Activated T-helper 1 cell treated with anti-CD3 and anti-CD28 coated beads, Interleukin-12 subunit alpha, Interleukin-12 subunit beta, Interleukin-2, Interleukin-4 antibody, amounts not matched to agents 30 ng/mL and 10 ng/mL and 1 ng/mL, durations not matched to agents 14 hours and 24 hours and 36 hours (primary cell): ENCODE measurements at regions of chr12 and their contacts with region 1.

Region 1: DNA sequence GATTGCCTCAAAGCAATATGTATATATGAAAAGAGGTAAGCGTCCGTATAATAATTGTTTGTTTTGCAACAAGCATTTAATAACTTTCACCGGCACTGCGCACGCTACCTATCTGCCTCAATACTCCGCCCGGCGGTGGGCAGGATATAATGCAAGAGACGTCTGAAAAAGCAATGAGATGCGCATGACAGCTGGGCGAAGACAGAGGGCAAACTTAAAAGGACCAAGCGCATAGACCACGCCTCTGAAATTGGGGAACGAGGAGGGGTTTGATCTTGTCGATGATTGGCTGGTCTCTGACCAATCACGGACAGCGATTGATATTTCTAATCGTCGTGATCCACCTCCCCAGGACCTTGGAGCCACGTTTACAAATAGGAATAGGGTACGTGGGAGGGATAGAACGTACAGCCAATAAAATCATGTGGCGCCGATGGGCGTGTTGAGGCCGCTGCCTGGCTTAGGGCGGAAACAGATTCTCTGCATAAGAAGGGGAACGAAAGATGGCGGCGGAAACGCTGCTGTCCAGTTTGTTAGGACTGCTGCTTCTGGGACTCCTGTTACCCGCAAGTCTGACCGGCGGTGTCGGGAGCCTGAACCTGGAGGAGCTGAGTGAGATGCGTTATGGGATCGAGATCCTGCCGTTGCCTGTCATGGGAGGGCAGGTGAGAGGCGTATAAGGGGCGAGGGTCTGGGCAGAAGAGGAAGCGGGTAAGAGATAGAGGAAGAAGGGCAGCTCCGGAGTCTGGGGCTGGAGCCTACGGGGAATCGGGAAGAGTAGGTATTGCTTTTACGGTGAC is at the start of gene OS9:
- DNase-seq: peak; percentile 95
- H3K4me3 Mint-ChIP-seq: no peak within 1 kb of the TSS
- H3K27ac Mint-ChIP-seq: no peak within 1 kb of the TSS
- H3K4me1 Mint-ChIP-seq: no peaks in the 10 kb centered on the region
- H3K27me3 Mint-ChIP-seq: peaks cover 19% of the 10 kb centered on the region
- total RNA-seq, gene OS9: 99.6 and 100.0 TPM in 2 replicates

Region 2: GRCh38 chr12:57476162-57476992 is 217.5 kb before region 1 on chr12:
- intact Hi-C with region 1: loop called (anchors 5 kb)
- DNase-seq: peak; percentile 67
- H3K4me3 Mint-ChIP-seq: peak overlapping the region; percentile 93
- H3K27ac Mint-ChIP-seq: peak overlapping the region; percentile 97
- H3K4me1 Mint-ChIP-seq: peaks cover 54% of the 10 kb centered on the region
- H3K27me3 Mint-ChIP-seq: no peaks in the 10 kb centered on the region

Region 3: GRCh38 chr12:57583008-57583831 is 110.6 kb before region 1 on chr12:
- intact Hi-C with region 1: loop called (anchors 1 kb)
- DNase-seq: peak; percentile 61
- H3K4me3 Mint-ChIP-seq: no peak overlapping the region
- H3K27ac Mint-ChIP-seq: no peak overlapping the region
- H3K4me1 Mint-ChIP-seq: peaks cover 7% of the 10 kb centered on the region
- H3K27me3 Mint-ChIP-seq: peaks cover 3% of the 10 kb centered on the region

Region 4: GRCh38 chr12:57621497-57622292 is 72.2 kb before region 1 on chr12:
- intact Hi-C with region 1: loop called (anchors 2 kb)
- DNase-seq: peak; percentile 48
- H3K4me3 Mint-ChIP-seq: peak overlapping the region; percentile 80
- H3K27ac Mint-ChIP-seq: no peak overlapping the region
- H3K4me1 Mint-ChIP-seq: peaks cover 23% of the 10 kb centered on the region
- H3K27me3 Mint-ChIP-seq: peaks cover 91% of the 10 kb centered on the region

Region 5: GRCh38 chr12:57935839-57936512 is 242.1 kb after region 1 on chr12:
- intact Hi-C with region 1: loop called (anchors 1 kb)
- DNase-seq: peak; percentile 92
- H3K4me3 Mint-ChIP-seq: peak overlapping the region; percentile 94
- H3K27ac Mint-ChIP-seq: peak overlapping the region; percentile 99
- H3K4me1 Mint-ChIP-seq: peaks cover 36% of the 10 kb centered on the region
- H3K27me3 Mint-ChIP-seq: no peaks in the 10 kb centered on the region